CD14-positive monocyte (primary cell): ENCODE measurements at regions of chr10 and their contacts with region 1.

Region 1: GRCh38 chr10:101353692-101354327 is at the start of gene BTRC:
- DNase-seq: peak; percentile 99 to 100 (median 99)
- H3K4me3 ChIP-seq: peak within 1 kb of the TSS; percentile 63 to 89 (median 86)
- H3K4me3 Mint-ChIP-seq: peak within 1 kb of the TSS; percentile 93 to 97
- H3K27ac ChIP-seq: peak within 1 kb of the TSS; percentile 50 to 73
- H3K27ac Mint-ChIP-seq: peak within 1 kb of the TSS; percentile 82 to 92 (median 90)
- H3K4me1 ChIP-seq: peaks cover 14 to 15% of the 10 kb centered on the region in 2 donors
- H3K4me1 Mint-ChIP-seq: peaks cover 19% of the 10 kb centered on the region
- H3K27me3 ChIP-seq: peaks cover 3 to 10% of the 10 kb centered on the region in 2 donors
- H3K27me3 Mint-ChIP-seq: peaks cover 4 to 16% (median 10%) of the 10 kb centered on the region in 3 donors
- CTCF ChIP-seq: no peak
- polyA plus RNA-seq, gene BTRC: 2.8 to 4.3 (median 3.1) TPM

Region 2: GRCh38 chr10:101587725-101588653 is 234.2 kb after region 1 on chr10 and contains the starts of genes DPCD and POLL:
- intact Hi-C with region 1: loop called in 1 of 2 experiments (anchors 5 kb)
- DNase-seq: peak; percentile 83 to 94 (median 90)
- H3K4me3 ChIP-seq: peak within 1 kb of the TSS; percentile 70 to 99 (median 90)
- H3K4me3 Mint-ChIP-seq: peak within 1 kb of the TSS; percentile 93 to 94
- H3K27ac ChIP-seq: peak within 1 kb of the TSS in 1 of 2 donors; percentile 84
- H3K27ac Mint-ChIP-seq: peak within 1 kb of the TSS; percentile 81 to 92 (median 86)
- H3K4me1 ChIP-seq: peaks cover 39 to 45% of the 10 kb centered on the region in 2 donors
- H3K4me1 Mint-ChIP-seq: peaks cover 38% of the 10 kb centered on the region
- H3K27me3 ChIP-seq: no peaks in the 10 kb centered on the region
- H3K27me3 Mint-ChIP-seq: peaks cover 0 to 1% (median 0%) of the 10 kb centered on the region in 3 donors
- CTCF ChIP-seq: no peak
- polyA plus RNA-seq, gene DPCD: 8.6 to 17.0 (median 9.0) TPM
- polyA plus RNA-seq, gene POLL: 9.9 to 37.0 (median 10.6) TPM

Region 3: DNA sequence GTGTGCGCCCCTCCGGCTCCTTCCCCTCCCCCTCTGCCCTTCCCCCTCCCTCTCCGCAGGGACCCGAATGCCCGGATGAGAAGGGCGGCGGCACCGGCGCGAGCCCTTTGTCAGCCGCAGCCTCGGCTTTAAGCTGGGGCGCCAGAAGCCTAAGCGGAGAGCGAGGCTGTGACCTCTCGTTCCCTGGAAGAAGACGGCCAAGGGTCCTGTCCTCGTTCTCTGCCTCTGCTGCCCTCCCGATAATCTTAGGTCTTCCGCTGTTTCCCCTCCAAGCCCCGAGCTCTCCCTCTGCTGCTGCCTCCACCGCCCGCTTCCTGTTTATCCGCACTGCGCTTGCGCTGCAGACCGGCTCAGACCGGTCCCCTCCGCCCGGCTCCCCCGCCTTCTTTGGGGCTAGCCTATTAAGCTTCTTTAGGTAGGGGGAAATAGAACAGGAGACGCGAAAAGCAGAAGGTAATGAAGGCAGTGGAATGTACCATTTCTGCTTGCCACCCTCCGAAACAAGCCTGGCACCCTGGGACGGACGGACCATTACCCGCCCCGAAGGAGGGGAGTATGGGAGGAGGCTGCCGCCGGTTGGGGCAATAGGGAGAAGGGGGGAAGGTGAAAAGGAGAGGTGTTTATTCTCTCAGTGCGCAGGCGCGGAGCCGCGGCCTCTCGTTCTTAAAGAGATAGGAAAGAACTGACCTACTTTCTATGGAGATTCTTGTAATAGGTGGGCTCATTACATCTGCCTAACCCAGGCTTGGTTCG is 464.5 kb after region 1 on chr10 and contains the start of gene OGA:
- intact Hi-C with region 1: loop called in 1 of 2 experiments (anchors 10 kb)
- DNase-seq: peak; percentile 98 to 99 (median 99)
- H3K4me3 ChIP-seq: peak within 1 kb of the TSS; percentile 86 to 97 (median 88)
- H3K4me3 Mint-ChIP-seq: peak within 1 kb of the TSS; percentile 94 to 98
- H3K27ac ChIP-seq: peak within 1 kb of the TSS; percentile 70 to 89
- H3K27ac Mint-ChIP-seq: peak within 1 kb of the TSS; percentile 91 to 96 (median 93)
- H3K4me1 ChIP-seq: peaks cover 28 to 42% of the 10 kb centered on the region in 2 donors
- H3K4me1 Mint-ChIP-seq: peaks cover 46% of the 10 kb centered on the region
- H3K27me3 ChIP-seq: no peaks in the 10 kb centered on the region
- H3K27me3 Mint-ChIP-seq: no peaks in the 10 kb centered on the region
- CTCF ChIP-seq: no peak
- polyA plus RNA-seq, gene OGA: 6.9 to 104 (median 15.3) TPM